Activated naive CD4-positive, alpha-beta T cell treated with anti-CD3 and anti-CD28 coated beads for 36 hours (primary cell): ENCODE measurements at regions of chr1 and their contacts with region 1.

Region 1: GRCh38 chr1:2545759-2546514 is 10.2 kb upstream of the TNFRSF14 start:
- DNase-seq: peak; percentile 87
- H3K4me3 Mint-ChIP-seq: peak overlapping the region; percentile 81
- H3K27ac Mint-ChIP-seq: no peak overlapping the region
- H3K4me1 Mint-ChIP-seq: peaks cover 19% of the 10 kb centered on the region
- H3K27me3 Mint-ChIP-seq: no peaks in the 10 kb centered on the region

Region 2: DNA sequence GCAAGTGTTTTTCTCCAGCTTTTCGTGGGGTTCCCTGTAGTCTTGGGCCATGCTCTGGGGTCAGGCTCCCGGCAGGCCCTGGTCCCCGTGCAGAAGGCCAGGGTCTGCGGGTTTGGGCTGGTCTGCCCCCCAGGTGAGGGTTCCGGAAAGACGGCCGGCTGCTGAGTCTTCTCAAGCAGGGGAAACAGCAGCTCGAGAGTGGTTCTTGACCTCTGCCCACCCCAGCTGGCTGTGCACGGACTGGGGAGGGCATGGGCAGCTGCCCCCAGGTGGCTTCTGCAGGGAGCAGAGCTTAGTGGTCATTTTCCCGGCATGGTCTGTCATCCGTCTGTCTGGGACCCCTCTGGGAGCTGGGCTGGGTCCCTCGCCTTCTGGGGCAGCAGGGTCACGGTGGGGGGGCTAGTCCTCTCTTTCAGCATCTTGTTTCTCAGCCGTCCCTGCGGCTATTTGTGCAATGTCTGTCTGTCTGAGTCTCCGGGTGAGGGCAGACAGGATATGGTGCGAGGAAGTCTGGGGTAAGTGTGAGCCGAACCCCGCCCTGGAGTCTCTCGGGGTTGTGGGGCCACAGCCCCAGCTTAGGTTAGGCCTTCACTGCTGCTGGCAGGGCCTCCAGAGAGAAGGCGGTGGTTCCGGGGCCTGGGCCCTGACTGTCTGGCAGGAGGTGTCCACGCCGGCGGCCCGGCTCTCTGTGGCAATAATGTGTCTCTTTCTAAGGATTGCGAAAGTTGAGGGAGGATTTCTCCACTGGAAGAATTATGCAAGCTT is 311.8 kb before region 1 on chr1:
- CTCF ChIA-PET with region 1: no interaction called
- intact Hi-C with region 1: loop called (anchors 2 kb)
- DNase-seq: peak; percentile 82
- H3K4me3 Mint-ChIP-seq: peak overlapping the region; percentile 98
- H3K27ac Mint-ChIP-seq: peak overlapping the region; percentile 94
- H3K4me1 Mint-ChIP-seq: peaks cover 61% of the 10 kb centered on the region
- H3K27me3 Mint-ChIP-seq: no peaks in the 10 kb centered on the region

Region 3: DNA sequence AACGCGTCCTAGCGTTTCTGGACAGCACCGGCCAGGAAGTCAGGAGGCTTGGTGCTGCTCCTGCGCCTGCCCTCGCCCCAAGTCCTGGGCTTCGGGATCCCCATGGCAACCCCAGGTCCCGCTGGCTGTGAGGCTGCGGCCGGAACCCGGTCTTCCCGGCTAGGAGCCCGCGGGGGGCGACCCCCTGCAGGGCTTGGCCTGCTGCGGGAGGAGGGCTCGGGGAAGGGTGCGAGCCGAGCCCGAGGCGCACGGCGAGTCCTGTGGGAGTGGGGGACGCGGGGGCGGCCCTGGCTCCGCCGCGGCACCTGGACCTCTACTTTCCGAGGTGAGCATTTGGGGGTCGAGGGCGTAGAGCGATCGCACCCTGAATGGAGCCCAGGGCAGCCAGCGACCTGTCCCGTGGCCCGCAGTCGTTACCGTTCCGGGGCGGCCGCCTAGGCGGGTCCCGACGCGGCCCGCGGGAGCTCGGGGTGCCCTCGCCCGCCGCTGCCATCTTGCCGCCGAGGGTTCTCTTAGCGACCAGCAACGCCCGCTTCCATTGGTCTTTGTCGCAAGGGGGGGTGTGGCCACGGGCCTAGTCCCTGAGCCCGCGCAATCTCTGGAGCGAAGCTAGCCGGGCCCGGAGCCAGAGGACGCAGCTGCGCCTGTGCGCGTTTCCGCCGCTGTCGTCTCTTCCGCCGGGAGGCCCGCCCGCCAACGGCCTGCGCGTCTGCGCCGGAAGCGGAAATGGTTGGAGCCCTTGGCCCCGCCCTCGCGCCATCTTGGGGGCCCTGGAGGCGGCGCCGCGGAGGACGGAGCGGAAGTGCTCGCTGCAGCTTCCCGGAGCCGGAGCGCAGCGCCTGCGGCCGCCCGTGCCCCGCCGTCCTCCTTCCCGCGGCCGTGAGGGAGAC is 154.7 kb before region 1 on chr1 and contains the starts of genes MORN1 and RER1:
- CTCF ChIA-PET with region 1: no interaction called
- intact Hi-C with region 1: loop called (anchors 1 kb)
- DNase-seq: peak; percentile 99
- H3K4me3 Mint-ChIP-seq: peak within 1 kb of the TSS; percentile 88
- H3K27ac Mint-ChIP-seq: peak within 1 kb of the TSS; percentile 79
- H3K4me1 Mint-ChIP-seq: peaks cover 40% of the 10 kb centered on the region
- H3K27me3 Mint-ChIP-seq: no peaks in the 10 kb centered on the region
- total RNA-seq, gene MORN1: 3.2 to 4.9 TPM
- total RNA-seq, gene RER1: 115 to 124 TPM

Region 4: GRCh38 chr1:2443277-2444137 is 102.4 kb before region 1 on chr1:
- CTCF ChIA-PET with region 1: no interaction called
- intact Hi-C with region 1: loop called (anchors 1 kb)
- DNase-seq: peak; percentile 62
- H3K4me3 Mint-ChIP-seq: no peak overlapping the region
- H3K27ac Mint-ChIP-seq: no peak overlapping the region
- H3K4me1 Mint-ChIP-seq: no peaks in the 10 kb centered on the region
- H3K27me3 Mint-ChIP-seq: peaks cover 7% of the 10 kb centered on the region

Region 5: GRCh38 chr1:2586154-2587070 is 40.5 kb after region 1 on chr1 and contains the start of gene PRXL2B:
- CTCF ChIA-PET with region 1: interaction called, 24 read pairs
- intact Hi-C with region 1: loop called (anchors 1 kb)
- DNase-seq: peak; percentile 99
- H3K4me3 Mint-ChIP-seq: peak within 1 kb of the TSS; percentile 80
- H3K27ac Mint-ChIP-seq: peak within 1 kb of the TSS; percentile 91
- H3K4me1 Mint-ChIP-seq: peaks cover 46% of the 10 kb centered on the region
- H3K27me3 Mint-ChIP-seq: no peaks in the 10 kb centered on the region
- total RNA-seq, gene PRXL2B: 21.8 to 22.1 TPM

Region 6: GRCh38 chr1:2611031-2611501 is 65.1 kb after region 1 on chr1:
- CTCF ChIA-PET with region 1: no interaction called
- intact Hi-C with region 1: no loop called
- DNase-seq: peak; percentile 36
- H3K4me3 Mint-ChIP-seq: no peak overlapping the region
- H3K27ac Mint-ChIP-seq: no peak overlapping the region
- H3K4me1 Mint-ChIP-seq: no peaks in the 10 kb centered on the region
- H3K27me3 Mint-ChIP-seq: no peaks in the 10 kb centered on the region